Sigmoid colon (tissue), 7 donors: ENCODE measurements at regions of chr16 and their contacts with region 1.

Region 1: GRCh38 chr16:50210266-50211038 is 55.9 kb upstream of the ADCY7 start:
- DNase-seq: peak; percentile 95
- H3K4me3 ChIP-seq: no peak overlapping the region
- H3K27ac ChIP-seq: peak overlapping the region; percentile 25 to 75 (median 70)
- H3K4me1 ChIP-seq: peaks cover 0 to 73% (median 59%) of the 10 kb centered on the region in 4 donors
- H3K27me3 ChIP-seq: no peaks in the 10 kb centered on the region
- CTCF ChIP-seq: peak; percentile 51 to 80 (median 74)
- EP300 ChIP-seq: no peak
- POLR2A ChIP-seq: no peak

Region 2: GRCh38 chr16:50024684-50025536 is 185.5 kb before region 1 on chr16 and contains the start of gene CNEP1R1:
- intact Hi-C with region 1: loop called (anchors 1 kb)
- DNase-seq: peak; percentile 98
- H3K4me3 ChIP-seq: peak within 1 kb of the TSS; percentile 89 to 100 (median 100)
- H3K27ac ChIP-seq: peak within 1 kb of the TSS; percentile 84 to 91 (median 88)
- H3K4me1 ChIP-seq: peaks cover 0 to 35% (median 21%) of the 10 kb centered on the region in 4 donors
- H3K27me3 ChIP-seq: no peaks in the 10 kb centered on the region
- CTCF ChIP-seq: peak; percentile 99 to 100 (median 100)
- EP300 ChIP-seq: peak in 1 of 4 donors; percentile 44
- POLR2A ChIP-seq: peak; percentile 38 to 53
- total RNA-seq, gene CNEP1R1: 10.2 to 18.9 (median 14.1) TPM

Region 3: DNA sequence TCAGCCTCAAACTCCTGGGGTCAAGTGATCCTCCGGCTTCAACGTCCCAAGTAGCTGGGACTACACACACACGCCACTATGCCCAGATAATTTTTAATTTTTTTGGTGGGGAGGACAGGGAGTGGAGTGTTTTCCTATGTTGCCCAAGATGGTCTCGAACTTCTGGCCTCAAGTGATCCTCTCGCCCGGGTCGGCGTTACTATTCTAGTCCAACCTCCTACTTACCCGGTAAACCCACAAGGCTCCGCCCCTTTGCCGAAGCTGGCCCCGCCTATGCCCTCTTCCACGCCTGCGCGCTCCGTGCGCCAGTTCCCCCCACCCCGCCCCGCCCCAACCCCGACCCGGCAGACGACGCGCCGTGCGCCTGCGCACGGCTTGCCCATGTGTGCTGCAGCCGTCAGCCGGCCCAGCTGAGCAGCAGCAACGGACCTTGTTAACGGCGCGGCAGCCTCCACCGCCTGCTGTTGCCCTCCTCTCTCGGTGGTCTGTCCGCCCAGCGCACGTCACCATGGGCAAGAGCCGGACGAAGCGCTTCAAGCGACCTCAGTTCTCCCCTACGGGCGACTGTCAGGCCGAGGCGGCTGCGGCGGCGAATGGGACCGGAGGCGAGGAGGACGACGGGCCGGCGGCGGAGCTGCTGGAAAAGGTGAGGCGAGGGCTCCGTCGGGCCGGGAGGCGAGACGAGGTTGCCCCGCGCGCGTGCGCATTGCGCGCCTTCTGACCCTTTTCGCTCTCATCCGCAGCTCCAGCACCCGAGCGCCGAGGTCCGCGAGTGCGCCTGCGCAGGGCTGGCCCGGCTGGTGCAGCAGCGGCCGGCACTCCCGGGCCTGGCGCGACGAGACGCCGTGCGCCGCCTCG is 144.6 kb before region 1 on chr16 and contains the start of gene HEATR3:
- intact Hi-C with region 1: loop called (anchors 5 kb)
- DNase-seq: peak; percentile 95
- H3K4me3 ChIP-seq: peak within 1 kb of the TSS; percentile 83 to 94 (median 93)
- H3K27ac ChIP-seq: peak within 1 kb of the TSS; percentile 94 to 100 (median 98)
- H3K4me1 ChIP-seq: peaks cover 0 to 27% (median 21%) of the 10 kb centered on the region in 4 donors
- H3K27me3 ChIP-seq: no peaks in the 10 kb centered on the region
- CTCF ChIP-seq: no peak
- EP300 ChIP-seq: no peak
- POLR2A ChIP-seq: peak; percentile 42 to 46
- total RNA-seq, gene HEATR3: 14.0 to 20.5 (median 15.1) TPM

Region 4: GRCh38 chr16:50152807-50153452 is 57.5 kb before region 1 on chr16 and contains the start of gene TENT4B:
- intact Hi-C with region 1: loop called (anchors 2 kb)
- DNase-seq: peak; percentile 94
- H3K4me3 ChIP-seq: peak within 1 kb of the TSS; percentile 93 to 98 (median 96)
- H3K27ac ChIP-seq: peak within 1 kb of the TSS; percentile 89 to 96 (median 94)
- H3K4me1 ChIP-seq: peaks cover 0 to 41% (median 29%) of the 10 kb centered on the region in 4 donors
- H3K27me3 ChIP-seq: no peaks in the 10 kb centered on the region
- CTCF ChIP-seq: no peak
- EP300 ChIP-seq: no peak
- POLR2A ChIP-seq: peak; percentile 50 to 66
- total RNA-seq, gene TENT4B: 14.9 to 23.5 (median 20.0) TPM

Region 5: DNA sequence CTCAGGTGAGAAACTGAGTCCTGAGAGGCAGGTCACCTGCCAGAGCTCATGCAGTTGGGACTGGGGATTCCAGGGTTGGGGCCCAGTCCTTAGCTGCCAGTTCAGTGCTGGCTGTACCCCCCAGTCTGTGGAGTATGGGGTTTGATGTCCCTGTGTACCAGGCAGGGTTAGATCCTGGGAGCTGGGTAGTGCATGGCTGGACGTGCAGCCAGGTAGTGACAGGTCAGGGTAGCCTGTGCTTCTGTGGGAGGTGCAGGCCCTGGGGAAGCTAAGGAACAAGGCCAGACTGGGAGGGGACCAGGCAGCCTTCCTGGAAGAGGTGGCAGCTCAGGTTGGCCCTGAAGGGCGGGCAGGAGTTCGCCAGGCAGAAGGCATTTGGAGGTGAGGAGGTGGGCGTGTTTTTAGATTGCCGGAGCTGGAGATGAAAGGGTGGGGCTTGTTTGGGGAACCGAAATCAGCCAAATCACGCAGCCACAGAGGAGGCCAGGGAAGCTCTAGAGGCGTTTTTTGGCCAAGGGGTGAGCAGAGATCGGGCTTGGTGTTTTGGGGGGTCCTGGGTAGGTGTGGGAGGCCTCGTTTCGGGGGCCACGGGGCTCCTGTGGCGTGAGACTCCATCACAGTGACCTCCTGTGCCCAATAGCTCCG is 63.4 kb after region 1 on chr16:
- intact Hi-C with region 1: no loop called
- DNase-seq: no peak
- H3K4me3 ChIP-seq: peak overlapping the region in 2 of 4 donors; percentile 17 to 35
- H3K27ac ChIP-seq: peak overlapping the region; percentile 47 to 53 (median 50)
- H3K4me1 ChIP-seq: no peaks in the 10 kb centered on the region
- H3K27me3 ChIP-seq: no peaks in the 10 kb centered on the region
- CTCF ChIP-seq: no peak
- EP300 ChIP-seq: no peak
- POLR2A ChIP-seq: no peak

Region 6: DNA sequence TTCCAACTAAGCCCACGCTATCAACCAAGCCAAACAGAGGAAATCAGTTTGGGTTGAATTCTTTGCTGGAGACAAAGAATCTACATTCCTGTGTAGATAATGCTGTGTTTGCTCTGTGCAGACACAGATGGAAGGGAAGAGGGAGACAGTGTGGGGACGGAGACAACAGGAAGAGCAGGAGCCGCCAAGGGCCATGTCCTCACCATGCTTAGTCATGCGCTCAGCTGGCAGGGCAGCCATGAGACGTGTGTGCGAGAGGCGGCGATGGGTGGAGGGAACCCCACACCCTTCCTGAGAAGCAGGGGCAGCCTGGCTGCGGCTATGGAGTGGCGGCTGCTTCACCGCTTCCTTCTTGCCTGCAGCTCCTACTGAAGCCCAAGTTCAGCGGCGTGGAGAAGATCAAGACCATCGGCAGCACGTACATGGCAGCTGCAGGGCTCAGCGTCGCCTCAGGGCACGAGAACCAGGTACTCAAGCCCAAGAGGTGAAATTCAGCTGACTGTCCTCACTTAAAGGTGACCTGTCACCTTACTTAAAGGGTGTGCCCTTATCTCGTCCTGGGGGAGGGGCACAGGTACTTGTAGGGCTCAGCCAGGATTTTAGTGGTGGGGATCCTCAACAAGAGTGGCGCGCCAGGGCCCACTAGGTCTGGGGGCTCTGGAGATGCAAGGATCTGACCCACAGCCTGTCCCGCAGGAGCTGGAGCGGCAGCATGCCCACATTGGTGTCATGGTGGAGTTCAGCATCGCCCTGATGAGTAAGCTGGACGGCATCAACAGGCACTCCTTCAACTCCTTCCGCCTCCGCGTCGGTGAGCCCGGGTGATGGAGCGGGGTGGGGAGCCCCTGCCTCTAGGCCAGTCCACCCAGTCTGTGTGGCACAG is 103.4 kb after region 1 on chr16:
- intact Hi-C with region 1: no loop called
- DNase-seq: peak; percentile 76
- H3K4me3 ChIP-seq: no peak overlapping the region
- H3K27ac ChIP-seq: peak overlapping the region in 1 of 4 donors; percentile 12
- H3K4me1 ChIP-seq: peaks cover 0 to 17% (median 13%) of the 10 kb centered on the region in 4 donors
- H3K27me3 ChIP-seq: no peaks in the 10 kb centered on the region
- CTCF ChIP-seq: no peak
- EP300 ChIP-seq: no peak
- POLR2A ChIP-seq: no peak

Region 7: GRCh38 chr16:50354629-50355456 is 144.4 kb after region 1 on chr16:
- intact Hi-C with region 1: loop called (anchors 2 kb)
- DNase-seq: no peak
- H3K4me3 ChIP-seq: no peak overlapping the region
- H3K27ac ChIP-seq: no peak overlapping the region
- H3K4me1 ChIP-seq: peaks cover 0 to 16% (median 5%) of the 10 kb centered on the region in 4 donors
- H3K27me3 ChIP-seq: no peaks in the 10 kb centered on the region
- CTCF ChIP-seq: peak in 3 of 4 experiments; percentile 37 to 64 (median 40)
- EP300 ChIP-seq: no peak
- POLR2A ChIP-seq: no peak

Region 8: GRCh38 chr16:50665128-50665878 is 454.9 kb after region 1 on chr16:
- intact Hi-C with region 1: loop called (anchors 10 kb)
- DNase-seq: peak; percentile 86
- H3K4me3 ChIP-seq: peak overlapping the region; percentile 38 to 54 (median 52)
- H3K27ac ChIP-seq: peak overlapping the region; percentile 68 to 76 (median 73)
- H3K4me1 ChIP-seq: peaks cover 0 to 13% (median 7%) of the 10 kb centered on the region in 4 donors
- H3K27me3 ChIP-seq: no peaks in the 10 kb centered on the region
- CTCF ChIP-seq: peak; percentile 79 to 82 (median 80)
- EP300 ChIP-seq: no peak
- POLR2A ChIP-seq: no peak